Astrocyte of the cerebellum (primary cell): ENCODE measurements at regions of chr16 and their contacts with region 1.

Region 1: DNA sequence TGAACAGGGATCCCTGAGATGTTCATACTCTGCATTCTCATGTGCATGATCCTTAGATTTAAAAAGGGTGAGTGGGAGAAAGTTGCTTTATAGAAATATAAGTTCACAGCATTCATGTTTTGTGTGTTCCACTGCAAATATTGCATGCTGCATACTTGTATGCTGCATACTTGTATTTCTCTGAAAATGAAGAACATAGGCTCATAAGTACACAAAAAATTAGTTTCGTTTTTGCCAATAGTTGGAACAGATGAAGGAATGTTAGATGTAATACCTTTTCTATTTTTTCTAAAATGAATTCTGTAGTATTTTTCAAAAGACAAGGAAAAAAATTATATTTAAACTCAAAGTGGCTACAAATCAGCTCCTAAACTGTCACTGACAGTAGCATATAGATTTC is 79.0 kb downstream of the NFAT5 start:
- DNase-seq: no peak
- H3K4me3 ChIP-seq: no peak overlapping the region
- CTCF ChIP-seq: no peak

Region 2: GRCh38 chr16:69613378-69614154 is 31.2 kb before region 1 on chr16:
- in situ Hi-C with region 1: loop called (anchors 5 kb)
- DNase-seq: no peak
- H3K4me3 ChIP-seq: no peak overlapping the region
- CTCF ChIP-seq: no peak